Calu3 (cell line): ENCODE measurements at regions of chr1 and their contacts with region 1.

Region 1: GRCh38 chr1:198465201-198466144 is 75.0 kb downstream of the ATP6V1G3 start:
- DNase-seq: no peak
- H3K4me3 Mint-ChIP-seq: no peak overlapping the region
- H3K27ac Mint-ChIP-seq: peak overlapping the region; percentile 35
- H3K4me1 Mint-ChIP-seq: peaks cover 17% of the 10 kb centered on the region
- H3K27me3 Mint-ChIP-seq: no peaks in the 10 kb centered on the region
- CTCF ChIP-seq: peak; percentile 61

Region 2: GRCh38 chr1:197521118-197521739 is 944.2 kb before region 1 on chr1:
- CTCF ChIA-PET with region 1: no interaction called
- intact Hi-C with region 1: loop called (anchors 5 kb)
- DNase-seq: peak; percentile 51
- H3K4me3 Mint-ChIP-seq: no peak overlapping the region
- H3K27ac Mint-ChIP-seq: no peak overlapping the region
- H3K4me1 Mint-ChIP-seq: no peaks in the 10 kb centered on the region
- H3K27me3 Mint-ChIP-seq: no peaks in the 10 kb centered on the region
- CTCF ChIP-seq: peak; percentile 72

Region 3: DNA sequence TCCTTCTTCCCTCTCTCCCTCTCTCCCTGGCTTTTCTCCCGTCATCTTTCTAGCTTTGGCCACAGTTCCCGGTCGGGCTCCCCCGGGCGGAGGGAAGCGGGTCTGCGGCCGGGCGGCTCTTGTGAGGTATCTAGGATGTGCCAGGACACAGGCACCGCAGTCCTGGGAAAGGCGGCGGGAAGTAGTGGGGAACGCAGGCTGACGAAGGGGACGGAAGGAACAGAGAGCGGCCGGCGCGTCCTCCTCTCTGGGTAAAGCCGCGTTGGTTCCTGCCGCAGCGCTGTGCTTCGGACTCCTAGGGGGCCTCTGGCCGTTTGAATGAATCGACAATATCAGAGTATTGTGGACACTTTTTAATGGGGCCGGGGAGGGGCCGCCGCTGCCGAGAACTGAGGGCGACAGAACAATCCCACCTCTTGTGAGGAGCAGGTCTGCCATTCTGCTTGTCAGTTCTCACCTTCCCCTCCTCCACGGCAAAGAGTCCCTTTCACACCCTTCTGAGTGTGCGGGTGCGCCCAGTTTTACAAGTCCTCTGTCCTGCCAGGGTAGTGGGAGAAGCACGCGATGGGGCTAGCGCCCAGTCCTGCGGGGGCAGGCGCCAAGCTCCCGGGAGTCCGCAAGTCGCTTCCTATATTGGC is 549.5 kb before region 1 on chr1:
- CTCF ChIA-PET with region 1: no interaction called
- intact Hi-C with region 1: loop called (anchors 5 kb)
- DNase-seq: peak; percentile 88
- H3K4me3 Mint-ChIP-seq: peak overlapping the region; percentile 76
- H3K27ac Mint-ChIP-seq: no peak overlapping the region
- H3K4me1 Mint-ChIP-seq: peaks cover 37% of the 10 kb centered on the region
- H3K27me3 Mint-ChIP-seq: peaks cover 13% of the 10 kb centered on the region
- CTCF ChIP-seq: peak; percentile 72

Region 4: GRCh38 chr1:198088360-198089071 is 377.0 kb before region 1 on chr1:
- CTCF ChIA-PET with region 1: no interaction called
- intact Hi-C with region 1: loop called (anchors 2 kb)
- DNase-seq: peak; percentile 47
- H3K4me3 Mint-ChIP-seq: peak overlapping the region; percentile 63
- H3K27ac Mint-ChIP-seq: peak overlapping the region; percentile 87
- H3K4me1 Mint-ChIP-seq: peaks cover 49% of the 10 kb centered on the region
- H3K27me3 Mint-ChIP-seq: no peaks in the 10 kb centered on the region
- CTCF ChIP-seq: peak; percentile 68

Region 5: DNA sequence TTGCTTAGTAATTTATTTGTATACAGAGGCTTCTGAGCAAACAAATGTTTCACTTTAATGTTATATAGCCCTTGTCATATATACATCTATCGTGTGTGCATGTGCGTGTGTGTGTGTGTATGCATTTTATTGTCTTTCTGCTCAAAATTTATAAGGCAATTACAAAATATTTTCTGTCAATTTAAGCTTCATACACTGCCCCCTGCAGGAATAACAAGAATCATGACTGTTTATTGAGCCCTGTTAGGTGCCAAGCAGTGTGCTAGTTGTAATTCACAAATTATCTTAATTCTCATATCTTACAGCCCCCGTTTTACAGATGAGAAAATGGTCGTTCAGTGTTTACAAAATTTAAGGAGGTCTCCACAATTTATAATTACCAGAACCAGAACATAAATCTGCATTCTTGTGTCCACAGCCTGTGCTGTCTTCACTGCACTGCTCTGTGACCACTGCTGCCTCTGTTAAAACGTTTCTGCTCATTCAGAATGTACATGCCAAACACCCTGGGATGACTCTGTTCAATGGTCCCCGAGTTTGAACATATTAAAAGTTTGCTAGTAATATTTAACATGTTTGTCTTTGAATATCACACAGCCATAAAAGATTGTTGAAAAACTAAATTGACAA is 106.3 kb before region 1 on chr1:
- CTCF ChIA-PET with region 1: no interaction called
- intact Hi-C with region 1: loop called (anchors 10 kb)
- DNase-seq: no peak
- H3K4me3 Mint-ChIP-seq: no peak overlapping the region
- H3K27ac Mint-ChIP-seq: no peak overlapping the region
- H3K4me1 Mint-ChIP-seq: no peaks in the 10 kb centered on the region
- H3K27me3 Mint-ChIP-seq: no peaks in the 10 kb centered on the region
- CTCF ChIP-seq: no peak